ENCODE measurements at regions of chr5 and their contacts with region 1.

Region 1: DNA sequence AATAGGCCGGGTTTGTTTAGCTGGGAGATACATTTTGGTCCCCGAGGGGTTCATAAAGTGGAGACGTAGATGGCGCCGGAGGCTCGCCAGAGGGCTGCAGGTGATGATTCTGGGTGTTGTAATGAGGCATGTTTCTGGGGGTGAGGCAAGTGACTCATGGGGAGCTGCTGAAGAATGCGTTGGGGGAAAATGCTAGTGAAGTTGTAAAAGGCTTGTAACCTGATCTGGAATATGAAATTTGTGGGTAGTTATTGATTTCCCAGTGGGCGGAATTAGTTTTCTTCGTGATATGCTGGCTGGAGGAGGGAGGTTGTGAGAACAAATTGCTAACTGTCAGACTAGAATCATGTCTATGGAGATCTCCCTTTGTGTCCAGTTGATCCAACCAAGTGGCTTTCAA is 158.3 kb downstream of the DOCK2 start:
- DNase-seq: no peak
- H3K4me3 ChIP-seq: no peak overlapping the region
- H3K27ac ChIP-seq: no peak overlapping the region
- H3K4me1 ChIP-seq: no peaks in the 10 kb centered on the region
- H3K27me3 ChIP-seq: no peaks in the 10 kb centered on the region
- CTCF ChIP-seq: no peak
- POLR2A ChIP-seq: no peak

Region 2: GRCh38 chr5:169742771-169743296 is 52.5 kb before region 1 on chr5:
- intact Hi-C with region 1: no loop called
- DNase-seq: peak in 1 of 2 donors; percentile 76
- H3K4me3 ChIP-seq: no peak overlapping the region
- H3K27ac ChIP-seq: peak overlapping the region; percentile 50 to 59
- H3K4me1 ChIP-seq: no peaks in the 10 kb centered on the region
- H3K27me3 ChIP-seq: no peaks in the 10 kb centered on the region
- CTCF ChIP-seq: no peak
- POLR2A ChIP-seq: no peak

Region 3: DNA sequence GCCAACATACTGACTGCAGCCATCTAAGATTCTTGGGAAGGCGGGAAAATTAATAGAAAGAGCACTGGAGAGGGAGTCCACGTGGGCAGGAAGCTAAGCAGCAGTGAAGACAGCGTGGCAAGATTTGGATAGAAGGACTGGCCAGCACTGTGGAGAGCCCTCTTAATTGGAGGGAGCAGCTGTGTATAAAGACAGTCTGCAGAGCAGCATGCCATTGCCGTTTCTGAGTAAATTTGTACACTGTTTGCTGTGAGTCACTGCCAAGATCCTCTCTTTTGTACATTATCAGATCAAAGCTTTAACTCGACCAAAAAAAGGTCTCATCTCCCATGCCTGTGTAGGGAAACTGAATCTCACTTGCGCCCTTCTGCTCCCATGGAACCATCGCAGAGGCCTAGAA is 139.7 kb after region 1 on chr5:
- intact Hi-C with region 1: loop called (anchors 10 kb)
- DNase-seq: no peak
- H3K4me3 ChIP-seq: no peak overlapping the region
- H3K27ac ChIP-seq: no peak overlapping the region
- H3K4me1 ChIP-seq: no peaks in the 10 kb centered on the region
- H3K27me3 ChIP-seq: no peaks in the 10 kb centered on the region
- CTCF ChIP-seq: no peak
- POLR2A ChIP-seq: no peak

Measured in breast epithelium (tissue), 4 donors.